Activated T-helper 1 cell treated with anti-CD3 and anti-CD28 coated beads, Interleukin-12 subunit alpha, Interleukin-12 subunit beta, Interleukin-2, Interleukin-4 antibody, amounts not matched to agents 30 ng/mL and 10 ng/mL and 1 ng/mL, durations not matched to agents 14 hours and 24 hours and 36 hours (primary cell): ENCODE measurements at regions of chr9 and their contacts with region 1.

Region 1: DNA sequence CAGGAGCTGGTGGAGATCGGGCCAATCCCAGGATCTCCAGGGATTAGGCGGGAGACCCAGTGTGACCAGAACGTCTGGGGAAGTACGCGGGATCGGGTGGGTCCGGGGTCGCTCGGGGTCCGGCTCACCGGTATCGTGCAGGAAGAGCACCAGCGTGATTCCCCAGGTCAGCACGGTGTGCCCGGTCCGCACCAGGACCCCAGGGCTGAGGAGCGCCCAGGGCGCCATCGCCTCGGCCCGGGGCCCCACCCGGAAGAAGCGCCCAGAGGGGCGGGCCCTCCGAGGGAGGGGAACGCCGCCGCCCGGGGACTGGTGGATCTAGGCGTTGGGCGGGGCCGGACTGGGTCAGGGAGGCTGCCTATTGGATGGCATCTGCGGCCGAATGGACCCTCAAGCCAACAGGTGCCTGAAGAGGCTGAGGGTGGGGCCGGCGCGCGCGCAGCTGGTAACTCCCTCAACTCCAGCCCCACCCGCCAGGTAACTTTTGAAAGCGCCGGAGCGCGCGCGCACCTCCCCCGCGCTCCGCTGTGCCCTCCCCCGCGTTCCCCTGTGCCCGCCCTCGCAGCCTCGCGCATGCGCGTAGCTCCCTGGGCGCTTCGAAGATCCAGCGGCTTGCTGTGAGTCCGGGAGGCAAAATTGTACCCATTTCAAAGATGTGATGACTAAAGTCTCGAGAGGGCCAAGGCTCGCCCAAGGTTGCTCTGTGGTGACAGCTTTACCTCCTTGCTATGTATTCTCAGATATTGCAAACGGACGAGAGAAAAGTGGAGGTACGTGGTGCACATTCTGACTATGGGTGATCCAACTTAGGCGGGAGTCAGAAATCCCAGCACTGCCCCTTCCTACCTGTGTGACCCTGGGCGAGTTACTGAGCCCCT is at the start of gene ZDHHC12:
- DNase-seq: peak; percentile 99
- H3K4me3 Mint-ChIP-seq: peak within 1 kb of the TSS; percentile 92
- H3K27ac Mint-ChIP-seq: peak within 1 kb of the TSS; percentile 93
- H3K4me1 Mint-ChIP-seq: peaks cover 42% of the 10 kb centered on the region
- H3K27me3 Mint-ChIP-seq: no peaks in the 10 kb centered on the region
- total RNA-seq, gene ZDHHC12: 51.7 and 54.4 TPM in 2 replicates

Region 2: DNA sequence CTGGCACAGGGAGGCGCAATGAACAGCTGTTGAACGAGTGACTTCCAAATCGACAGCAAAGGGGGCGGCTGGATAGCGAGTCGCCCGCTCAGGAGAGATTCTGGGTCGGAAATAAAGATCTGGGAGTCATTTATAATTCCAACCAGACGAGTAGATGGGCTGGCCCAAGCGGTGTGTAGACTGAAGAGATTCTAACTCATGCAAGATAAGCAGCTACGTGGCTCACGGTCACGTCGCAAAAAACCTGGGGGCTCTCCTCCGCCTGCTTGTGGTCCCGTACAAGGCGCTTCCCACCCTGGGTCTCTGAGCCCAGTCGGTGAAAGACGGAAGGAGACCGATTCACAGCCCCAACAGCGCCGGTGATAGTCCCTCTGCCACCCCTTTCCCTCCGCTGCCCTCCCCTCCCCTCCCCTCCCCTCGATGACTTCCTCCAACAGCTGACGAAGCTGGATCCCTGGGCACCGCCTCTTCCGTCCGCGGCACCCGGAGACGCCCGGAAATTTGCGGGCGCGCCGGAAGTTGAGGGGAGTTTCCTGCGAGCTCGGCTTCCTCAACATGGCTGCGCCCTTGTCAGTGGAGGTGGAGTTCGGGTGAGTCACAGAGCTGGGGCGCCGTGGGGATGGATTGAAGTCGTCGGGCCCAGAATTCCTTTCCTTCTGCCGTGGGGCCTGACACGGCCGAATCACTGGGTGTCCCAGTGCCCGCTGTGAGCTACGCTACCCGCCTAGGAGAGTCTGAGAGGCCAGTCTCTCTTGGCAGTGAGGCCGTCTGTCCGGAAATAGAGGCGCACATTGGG is 353.1 kb before region 1 on chr9 and contains the start of gene URM1:
- intact Hi-C with region 1: loop called (anchors 1 kb)
- DNase-seq: peak; percentile 96
- H3K4me3 Mint-ChIP-seq: peak within 1 kb of the TSS; percentile 96
- H3K27ac Mint-ChIP-seq: peak within 1 kb of the TSS; percentile 94
- H3K4me1 Mint-ChIP-seq: peaks cover 33% of the 10 kb centered on the region
- H3K27me3 Mint-ChIP-seq: no peaks in the 10 kb centered on the region
- total RNA-seq, gene URM1: 81.6 and 82.6 TPM in 2 replicates

Region 3: DNA sequence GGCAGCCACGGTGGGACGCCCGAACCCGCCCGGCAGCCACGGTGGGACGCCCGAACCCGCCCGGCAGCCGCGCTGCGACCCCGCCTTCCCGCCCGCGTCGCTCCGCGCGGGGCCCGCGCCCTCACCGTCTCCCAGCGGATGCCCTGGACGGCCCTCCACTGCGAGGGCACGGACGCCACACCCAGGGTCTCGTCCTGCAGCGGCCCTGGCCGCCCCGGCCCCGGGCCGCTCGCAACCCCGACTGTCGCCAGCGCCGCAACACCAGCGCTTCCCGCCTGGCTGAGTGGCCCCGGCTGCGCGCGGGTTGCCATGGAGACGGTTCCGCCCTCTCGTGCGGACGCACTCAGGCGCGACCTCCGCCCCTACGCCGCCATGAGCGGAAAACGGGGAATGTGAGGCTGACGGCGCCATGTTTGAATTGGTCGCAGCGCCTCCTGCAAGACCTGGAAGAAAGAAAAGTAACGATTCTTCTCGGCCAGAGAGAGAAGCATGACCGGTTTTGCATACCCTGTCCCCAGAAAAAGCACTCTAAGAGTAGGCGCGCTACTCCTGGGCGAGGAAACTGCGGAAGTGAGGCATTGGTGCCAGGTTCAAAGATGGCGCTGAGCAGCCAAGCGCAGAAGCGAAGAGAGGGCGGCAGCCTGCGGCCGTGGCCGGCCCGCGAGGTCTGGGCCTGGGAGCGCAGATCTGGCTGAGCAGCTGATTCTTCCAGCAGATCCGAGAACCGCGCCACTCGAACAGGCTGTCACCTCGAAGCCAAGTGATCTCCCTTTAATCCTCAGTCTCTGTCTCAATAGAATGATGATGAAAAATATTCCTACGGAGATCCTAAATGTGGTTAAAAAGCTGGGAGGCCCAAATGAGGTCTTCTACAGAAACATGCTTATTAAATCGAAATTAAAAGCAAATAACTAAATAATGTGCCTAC is 67.4 kb before region 1 on chr9 and contains the start of gene DYNC2I2:
- intact Hi-C with region 1: loop called (anchors 2 kb)
- DNase-seq: peak; percentile 95
- H3K4me3 Mint-ChIP-seq: peak within 1 kb of the TSS; percentile 91
- H3K27ac Mint-ChIP-seq: peak within 1 kb of the TSS; percentile 100
- H3K4me1 Mint-ChIP-seq: peaks cover 15% of the 10 kb centered on the region
- H3K27me3 Mint-ChIP-seq: no peaks in the 10 kb centered on the region
- total RNA-seq, gene DYNC2I2: 41.5 and 43.9 TPM in 2 replicates

Region 4: GRCh38 chr9:128702445-128702948 is 21.6 kb before region 1 on chr9 and contains the start of gene PKN3:
- intact Hi-C with region 1: loop called (anchors 1 kb)
- DNase-seq: peak; percentile 82
- H3K4me3 Mint-ChIP-seq: peak within 1 kb of the TSS; percentile 86
- H3K27ac Mint-ChIP-seq: peak within 1 kb of the TSS; percentile 77
- H3K4me1 Mint-ChIP-seq: no peaks in the 10 kb centered on the region
- H3K27me3 Mint-ChIP-seq: peaks cover 2% of the 10 kb centered on the region
- total RNA-seq, gene PKN3: 17.7 and 19.3 TPM in 2 replicates

Region 5: DNA sequence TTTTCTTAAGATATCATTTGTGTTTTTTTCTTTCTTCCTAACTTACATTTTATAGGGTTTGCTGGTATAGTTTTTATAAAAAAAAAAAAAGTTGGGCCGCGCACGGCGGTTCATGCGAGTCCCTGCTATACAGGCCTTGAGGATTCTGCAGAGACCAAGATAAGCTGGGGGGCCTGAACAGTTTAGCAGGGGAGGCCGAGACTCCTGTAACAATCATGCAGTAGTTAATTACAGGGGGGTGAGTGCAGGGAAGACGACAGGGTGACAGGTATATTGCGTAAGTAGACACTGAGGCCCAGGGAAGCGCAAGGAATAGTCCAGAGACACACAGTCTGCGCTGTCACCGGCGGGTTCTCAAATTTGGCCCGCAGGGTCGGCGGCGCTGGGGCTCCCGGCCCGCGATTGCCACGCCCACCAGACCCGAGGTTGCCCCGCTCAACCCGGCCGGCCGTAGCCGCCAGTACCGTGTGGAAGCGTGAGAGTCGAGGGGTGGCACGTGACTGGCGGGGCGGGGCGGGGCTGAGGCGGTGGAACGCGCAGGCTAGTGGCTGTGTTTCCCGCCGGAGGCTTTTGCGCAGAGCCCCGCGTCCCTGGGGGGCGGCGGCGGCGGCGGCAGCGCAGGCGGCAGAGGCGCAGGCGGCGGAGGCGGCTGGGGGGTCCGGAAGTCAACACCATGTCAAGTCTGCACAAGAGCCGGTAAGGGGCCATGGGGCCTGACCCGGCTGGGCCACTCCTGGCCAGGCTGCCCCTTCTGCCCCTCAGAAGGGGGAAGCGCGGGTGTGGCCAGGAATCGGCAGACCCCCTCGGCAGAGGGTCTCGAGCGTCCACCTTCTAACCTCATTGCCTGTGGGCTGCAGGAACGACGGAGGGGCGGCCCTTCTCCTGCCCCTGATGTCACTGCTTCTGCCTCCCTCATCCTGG is 62.8 kb after region 1 on chr9 and contains the start of gene TBC1D13:
- intact Hi-C with region 1: loop called (anchors 1 kb)
- DNase-seq: peak; percentile 84
- H3K4me3 Mint-ChIP-seq: peak within 1 kb of the TSS; percentile 97
- H3K27ac Mint-ChIP-seq: peak within 1 kb of the TSS; percentile 89
- H3K4me1 Mint-ChIP-seq: peaks cover 22% of the 10 kb centered on the region
- H3K27me3 Mint-ChIP-seq: no peaks in the 10 kb centered on the region
- total RNA-seq, gene TBC1D13: 21.2 and 22.3 TPM in 2 replicates

Region 6: DNA sequence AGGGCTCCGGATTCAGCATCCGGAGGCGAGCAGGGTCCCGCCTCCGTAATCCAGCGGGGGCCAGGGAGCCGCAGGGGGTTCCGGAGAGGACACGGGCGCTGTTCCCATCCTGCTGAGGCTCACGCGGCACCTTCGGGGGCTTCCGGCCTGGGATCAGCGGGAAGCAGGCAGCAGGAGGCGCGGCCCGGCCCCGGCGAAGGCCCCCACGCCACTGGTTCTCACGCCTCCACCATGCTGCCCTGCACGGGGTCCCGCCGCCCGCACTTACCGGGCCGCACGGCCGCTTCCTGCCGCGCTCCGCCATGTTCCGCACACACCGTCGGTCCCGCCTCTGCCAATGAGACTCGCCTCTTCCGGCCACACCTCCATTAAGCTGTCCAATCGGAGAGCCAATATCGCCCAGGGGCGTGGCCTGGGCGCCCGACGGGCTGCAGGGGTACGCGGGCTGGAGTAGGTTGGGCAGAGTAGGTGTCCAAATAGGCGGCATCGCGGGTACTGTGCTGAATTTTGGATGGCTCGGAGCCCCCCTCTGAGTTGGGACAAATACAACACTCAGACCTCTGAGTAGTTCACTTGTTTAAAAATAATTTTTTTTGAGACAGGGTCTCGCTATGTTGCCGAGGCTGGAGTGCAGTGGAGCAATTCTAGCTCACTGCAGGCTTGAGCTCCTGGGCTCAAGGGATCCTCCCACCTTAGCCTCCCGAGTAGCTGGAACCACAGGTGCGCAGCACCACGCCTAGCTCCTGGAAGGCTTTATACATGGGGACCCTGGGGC is 105.6 kb after region 1 on chr9 and contains the start of gene SPOUT1:
- intact Hi-C with region 1: loop called (anchors 1 kb)
- DNase-seq: peak; percentile 95
- H3K4me3 Mint-ChIP-seq: peak within 1 kb of the TSS; percentile 97
- H3K27ac Mint-ChIP-seq: peak within 1 kb of the TSS; percentile 88
- H3K4me1 Mint-ChIP-seq: peaks cover 23% of the 10 kb centered on the region
- H3K27me3 Mint-ChIP-seq: no peaks in the 10 kb centered on the region
- total RNA-seq, gene SPOUT1: 151 and 158 TPM in 2 replicates